ENCODE measurements at regions of chr17 and their contacts with region 1.

Region 1: GRCh38 chr17:62703775-62704378 is 76.4 kb downstream of the MRC2 start:
- DNase-seq: peak; percentile 87
- H3K4me3 ChIP-seq: peak overlapping the region; percentile 80
- H3K27ac ChIP-seq: peak overlapping the region; percentile 39
- H3K4me1 ChIP-seq: peaks cover 20% of the 10 kb centered on the region; the same call in 1 of the 2 replicates
- H3K27me3 ChIP-seq: no peaks in the 10 kb centered on the region

Region 2: GRCh38 chr17:62098623-62099231 is 605.1 kb before region 1 on chr17:
- in situ Hi-C with region 1: no loop called
- DNase-seq: no peak
- H3K4me3 ChIP-seq: no peak overlapping the region
- H3K27ac ChIP-seq: no peak overlapping the region
- H3K4me1 ChIP-seq: peaks cover 22% of the 10 kb centered on the region
- H3K27me3 ChIP-seq: peaks cover 8% of the 10 kb centered on the region; the same call in 1 of the 2 replicates

Region 3: GRCh38 chr17:62970617-62971272 is 266.9 kb after region 1 on chr17:
- in situ Hi-C with region 1: loop called (anchors 5 kb)
- DNase-seq: no peak
- H3K4me3 ChIP-seq: no peak overlapping the region
- H3K27ac ChIP-seq: no peak overlapping the region
- H3K4me1 ChIP-seq: peaks cover 15% of the 10 kb centered on the region; the same call in 1 of the 2 replicates
- H3K27me3 ChIP-seq: no peaks in the 10 kb centered on the region

Region 4: DNA sequence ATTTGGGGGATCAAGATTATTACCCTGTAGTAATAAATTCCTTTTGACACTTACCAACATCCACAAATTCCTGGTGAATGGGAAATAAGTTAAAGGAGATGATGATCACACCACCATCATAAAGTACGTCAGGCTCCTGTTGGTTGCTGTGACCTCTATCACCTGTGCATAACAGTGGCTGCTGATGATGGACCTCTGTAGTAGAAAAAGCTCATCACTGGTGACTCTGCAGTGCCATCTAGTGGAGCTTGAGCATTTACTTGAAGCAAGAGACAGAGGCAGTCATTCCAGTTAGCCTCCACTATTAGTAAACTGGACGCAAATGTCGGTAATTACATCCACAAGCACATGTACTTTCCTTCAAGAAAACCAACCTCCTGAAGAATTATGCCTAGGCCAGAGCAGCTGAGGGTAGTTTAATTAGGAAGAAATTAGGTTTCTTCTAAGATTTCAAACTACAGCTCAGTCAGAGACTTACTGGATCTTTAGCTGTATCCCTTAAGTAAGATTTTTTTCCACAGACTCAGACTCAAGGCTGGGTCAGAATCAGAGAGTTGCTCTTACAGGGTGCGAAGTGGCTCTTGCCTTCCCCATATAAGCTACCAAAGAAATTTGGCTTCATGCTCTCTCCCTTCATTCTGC is 702.9 kb after region 1 on chr17:
- in situ Hi-C with region 1: loop called (anchors 10 kb)
- DNase-seq: peak; percentile 91
- H3K4me3 ChIP-seq: no peak overlapping the region
- H3K27ac ChIP-seq: peak overlapping the region; percentile 62
- H3K4me1 ChIP-seq: peaks cover 38% of the 10 kb centered on the region
- H3K27me3 ChIP-seq: no peaks in the 10 kb centered on the region